ENCODE measurements at regions of chr17 and their contacts with region 1.

Region 1: DNA sequence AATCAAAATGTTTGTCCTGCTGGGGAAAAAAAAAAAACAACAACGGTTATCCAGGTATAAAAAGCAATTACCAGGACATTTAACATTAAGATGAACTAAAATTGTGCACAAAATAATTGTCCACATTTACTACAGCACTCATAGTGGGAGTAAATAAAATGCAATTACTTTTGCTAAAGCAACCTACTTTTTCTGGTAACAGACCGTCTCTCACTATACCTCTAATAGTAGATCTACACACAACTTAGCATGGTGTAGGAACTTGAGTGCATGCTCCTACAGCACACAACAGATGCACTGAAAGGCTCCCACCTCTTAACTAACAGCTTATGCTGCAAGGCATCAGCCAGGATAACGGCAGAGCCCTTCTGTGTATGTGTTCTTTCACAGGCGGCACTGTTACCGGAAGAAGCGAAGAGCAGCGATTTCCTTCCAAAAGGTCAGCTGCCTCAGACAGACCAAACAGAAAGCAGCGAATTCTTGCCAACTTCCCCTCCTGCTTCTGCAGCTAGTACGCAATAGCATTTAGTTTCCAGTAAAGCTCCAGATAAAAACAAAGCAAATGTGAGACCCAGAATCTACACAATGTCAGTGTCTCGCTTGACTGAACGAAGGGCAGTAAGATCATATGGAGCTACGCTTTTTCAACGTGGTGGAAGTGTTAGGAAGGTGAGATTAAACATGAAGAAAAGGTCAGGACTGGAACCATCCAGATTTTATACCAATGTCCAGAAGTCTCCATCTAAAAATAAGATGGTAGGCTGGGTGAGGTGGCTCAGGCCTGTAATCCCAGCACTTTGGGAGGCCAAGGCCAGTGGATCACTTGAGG is 27.6 kb downstream of the STAT5B start:
- DNase-seq: peak; percentile 47 to 95 (median 90)
- ATAC-seq: peak; percentile 93
- H3K4me3 ChIP-seq: peak overlapping the region; percentile 66
- H3K4me3 Mint-ChIP-seq: peak overlapping the region; percentile 83 to 99 (median 90)
- H3K27ac ChIP-seq: peak overlapping the region; percentile 97
- H3K27ac Mint-ChIP-seq: peak overlapping the region; percentile 97 to 99 (median 99)
- H3K4me1 ChIP-seq: peaks cover 43 to 52% of the 10 kb centered on the region in 2 donors
- H3K4me1 Mint-ChIP-seq: peaks cover 50 to 83% (median 74%) of the 10 kb centered on the region in 7 donors
- H3K27me3 ChIP-seq: no peaks in the 10 kb centered on the region
- H3K27me3 Mint-ChIP-seq: no peaks in the 10 kb centered on the region

Region 2: DNA sequence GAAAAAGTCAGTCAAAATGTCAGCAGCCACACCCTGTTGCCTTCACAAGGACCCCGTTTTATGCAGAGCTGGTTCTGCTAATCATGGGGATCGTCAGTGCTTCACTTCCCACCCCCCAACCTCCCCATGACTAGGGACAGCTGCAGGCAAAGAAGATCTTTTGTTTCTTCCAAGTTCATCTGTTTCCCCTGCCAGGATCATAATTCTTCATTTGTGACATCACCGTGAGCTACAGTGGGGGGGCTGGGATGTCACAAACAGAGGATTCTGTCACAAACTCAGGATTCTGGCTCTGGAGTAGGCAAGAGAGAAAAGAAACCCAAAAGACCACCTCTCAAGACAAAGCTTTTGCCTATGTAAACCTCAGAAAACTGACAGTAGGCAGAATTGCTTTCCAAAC is 256.0 kb before region 1 on chr17:
- CTCF ChIA-PET with region 1: no interaction called
- POLR2A ChIA-PET with region 1: no interaction called
- intact Hi-C with region 1: no loop called
- DNase-seq: no peak
- ATAC-seq: no peak
- H3K4me3 ChIP-seq: no peak overlapping the region
- H3K4me3 Mint-ChIP-seq: no peak overlapping the region
- H3K27ac ChIP-seq: no peak overlapping the region
- H3K27ac Mint-ChIP-seq: no peak overlapping the region
- H3K4me1 ChIP-seq: no peaks in the 10 kb centered on the region
- H3K4me1 Mint-ChIP-seq: peaks cover 0 to 7% (median 0%) of the 10 kb centered on the region in 7 donors
- H3K27me3 ChIP-seq: no peaks in the 10 kb centered on the region
- H3K27me3 Mint-ChIP-seq: no peaks in the 10 kb centered on the region

Region 3: GRCh38 chr17:42193969-42194899 is 54.3 kb before region 1 on chr17 and contains the start of gene GHDC:
- CTCF ChIA-PET with region 1: no interaction called
- POLR2A ChIA-PET with region 1: interaction called, 6 read pairs
- intact Hi-C with region 1: loop called in 1 of 2 experiments (anchors 5 kb)
- DNase-seq: peak; percentile 48 to 83 (median 75)
- ATAC-seq: peak; percentile 94
- H3K4me3 ChIP-seq: peak within 1 kb of the TSS; percentile 98
- H3K4me3 Mint-ChIP-seq: peak within 1 kb of the TSS; percentile 93 to 99 (median 95)
- H3K27ac ChIP-seq: peak within 1 kb of the TSS; percentile 82
- H3K27ac Mint-ChIP-seq: peak within 1 kb of the TSS; percentile 86 to 94 (median 90)
- H3K4me1 ChIP-seq: peaks cover 4 to 19% of the 10 kb centered on the region in 2 donors
- H3K4me1 Mint-ChIP-seq: peaks cover 13 to 33% (median 23%) of the 10 kb centered on the region in 7 donors
- H3K27me3 ChIP-seq: no peaks in the 10 kb centered on the region
- H3K27me3 Mint-ChIP-seq: no peaks in the 10 kb centered on the region
- total RNA-seq, gene GHDC: 15.5 to 29.8 (median 19.9) TPM

Region 4: GRCh38 chr17:42233941-42234340 is 14.6 kb before region 1 on chr17:
- CTCF ChIA-PET with region 1: interaction called, 5 read pairs
- POLR2A ChIA-PET with region 1: interaction called, 26 read pairs
- intact Hi-C with region 1: loop called in 1 of 2 experiments (anchors 2 kb)
- DNase-seq: no peak
- ATAC-seq: no peak
- H3K4me3 ChIP-seq: no peak overlapping the region
- H3K4me3 Mint-ChIP-seq: no peak overlapping the region
- H3K27ac ChIP-seq: no peak overlapping the region
- H3K27ac Mint-ChIP-seq: peak overlapping the region in 8 of 9 donors; percentile 36 to 82 (median 78)
- H3K4me1 ChIP-seq: peaks cover 0 to 5% of the 10 kb centered on the region in 2 donors
- H3K4me1 Mint-ChIP-seq: peaks cover 15 to 60% (median 50%) of the 10 kb centered on the region in 7 donors
- H3K27me3 ChIP-seq: no peaks in the 10 kb centered on the region
- H3K27me3 Mint-ChIP-seq: no peaks in the 10 kb centered on the region

Region 5: GRCh38 chr17:42287926-42288802 is 39.6 kb after region 1 on chr17 and contains the start of gene STAT5A:
- CTCF ChIA-PET with region 1: interaction called, 7 read pairs
- POLR2A ChIA-PET with region 1: interaction called, 137 read pairs
- intact Hi-C with region 1: loop called (anchors 1 kb)
- DNase-seq: peak; percentile 58 to 83 (median 79)
- ATAC-seq: peak; percentile 90
- H3K4me3 ChIP-seq: peak within 1 kb of the TSS; percentile 88
- H3K4me3 Mint-ChIP-seq: peak within 1 kb of the TSS; percentile 87 to 97 (median 93)
- H3K27ac ChIP-seq: peak within 1 kb of the TSS; percentile 93
- H3K27ac Mint-ChIP-seq: peak within 1 kb of the TSS; percentile 93 to 99 (median 96)
- H3K4me1 ChIP-seq: peaks cover 18 to 24% of the 10 kb centered on the region in 2 donors
- H3K4me1 Mint-ChIP-seq: peaks cover 27 to 65% (median 54%) of the 10 kb centered on the region in 7 donors
- H3K27me3 ChIP-seq: no peaks in the 10 kb centered on the region
- H3K27me3 Mint-ChIP-seq: no peaks in the 10 kb centered on the region
- total RNA-seq, gene STAT5A: 111 to 162 (median 150) TPM

Region 6: DNA sequence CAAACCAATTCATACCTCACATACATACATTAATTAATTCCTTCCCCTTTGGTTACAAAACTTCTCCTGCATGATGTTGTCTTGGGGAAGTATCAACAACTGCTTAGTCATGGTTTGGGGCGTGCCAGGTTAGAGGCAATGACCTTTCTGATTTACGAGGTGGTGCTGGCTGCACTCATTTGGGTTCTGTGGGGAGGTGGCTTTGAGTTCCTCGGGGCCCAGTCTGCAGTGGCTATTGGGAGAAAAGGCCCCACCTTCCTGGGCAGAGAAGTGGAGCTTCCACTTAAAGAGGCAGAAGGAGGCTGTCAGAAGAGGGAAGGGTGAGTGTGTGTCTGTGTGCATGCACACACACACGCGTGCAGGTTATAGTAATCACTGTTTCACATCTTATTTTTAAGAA is 1307.7 kb after region 1 on chr17:
- CTCF ChIA-PET with region 1: no interaction called
- POLR2A ChIA-PET with region 1: no interaction called
- intact Hi-C with region 1: no loop called
- DNase-seq: no peak
- ATAC-seq: peak; percentile 93
- H3K4me3 ChIP-seq: no peak overlapping the region
- H3K4me3 Mint-ChIP-seq: no peak overlapping the region
- H3K27ac ChIP-seq: no peak overlapping the region
- H3K27ac Mint-ChIP-seq: no peak overlapping the region
- H3K4me1 ChIP-seq: no peaks in the 10 kb centered on the region
- H3K4me1 Mint-ChIP-seq: peaks cover 0 to 7% (median 0%) of the 10 kb centered on the region in 7 donors
- H3K27me3 ChIP-seq: no peaks in the 10 kb centered on the region
- H3K27me3 Mint-ChIP-seq: peaks cover 8 to 35% (median 19%) of the 10 kb centered on the region in 5 donors